Aorta (tissue), 5 donors: ENCODE measurements at regions of chr5 and their contacts with region 1.

Region 1: DNA sequence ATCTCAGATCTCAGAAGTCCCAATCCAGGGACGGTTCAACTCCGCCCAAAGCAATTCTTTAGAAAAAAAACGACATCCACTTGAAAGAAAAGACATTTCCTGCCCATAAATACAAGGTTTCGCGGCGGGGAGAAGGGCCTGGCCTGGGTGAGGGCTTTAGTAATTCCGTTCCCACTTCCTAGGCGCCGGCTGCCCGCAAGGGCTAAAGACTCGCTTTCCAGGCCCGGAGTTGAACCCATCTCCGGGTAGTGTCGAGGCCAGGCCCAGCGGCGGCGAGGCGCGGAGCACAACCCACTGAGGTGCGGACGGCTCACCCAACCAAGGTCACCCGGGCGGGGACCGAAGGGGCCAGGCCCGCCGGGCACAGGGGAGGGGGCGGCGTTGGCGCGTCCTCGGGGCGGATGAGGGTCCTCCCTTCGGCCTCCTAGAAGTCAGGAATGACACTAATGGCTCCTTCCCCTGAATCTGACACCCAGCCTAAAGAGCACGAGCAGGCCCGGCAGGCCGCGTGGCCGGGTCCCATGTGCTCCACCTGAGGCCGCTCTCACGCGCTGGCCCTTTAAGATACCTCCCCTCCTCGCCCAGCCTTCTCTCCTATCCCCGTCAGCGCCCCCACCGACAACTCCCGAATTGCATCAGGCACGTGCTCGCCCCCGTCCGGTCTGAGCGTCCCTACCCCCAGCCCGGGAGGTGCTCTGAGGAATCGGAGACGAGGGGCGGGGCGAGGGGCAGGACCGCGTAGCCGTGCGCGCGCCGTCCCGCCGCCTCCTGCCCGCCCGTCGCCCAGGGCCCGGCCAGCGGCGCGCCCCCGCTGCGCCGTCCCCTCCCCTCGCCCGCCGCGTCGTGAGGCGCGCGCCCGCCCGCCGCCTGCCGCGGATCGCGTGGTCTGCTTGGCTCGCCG is 467 bp upstream of the LARP1 start:
- DNase-seq: peak; percentile 100
- ATAC-seq: peak; percentile 95
- H3K4me3 ChIP-seq: peak overlapping the region; percentile 66 to 91
- H3K27ac ChIP-seq: peak overlapping the region; percentile 57 to 98
- H3K4me1 ChIP-seq: peaks cover 0 to 3% of the 10 kb centered on the region in 2 donors
- H3K27me3 ChIP-seq: no peaks in the 10 kb centered on the region

Region 2: DNA sequence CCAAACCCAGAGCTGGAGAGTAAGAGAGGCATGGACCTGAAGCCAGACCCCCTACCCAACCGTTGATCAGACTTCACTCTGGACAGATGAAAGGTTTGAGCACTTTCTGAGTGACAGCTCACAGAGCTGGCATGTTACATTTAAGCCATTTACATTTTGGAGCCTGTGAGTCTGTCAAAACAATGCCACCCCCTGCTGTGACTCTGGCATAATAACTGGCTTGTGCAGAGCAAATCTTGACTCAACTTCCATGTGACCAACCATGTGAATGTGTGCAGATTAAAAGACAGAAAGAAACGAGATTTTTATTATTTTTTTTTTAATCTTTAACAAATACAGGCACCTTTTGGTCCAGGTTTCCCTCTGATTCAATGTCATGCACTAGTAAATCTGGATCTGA is 667.5 kb before region 1 on chr5:
- intact Hi-C with region 1: no loop called
- DNase-seq: no peak
- ATAC-seq: no peak
- H3K4me3 ChIP-seq: no peak overlapping the region
- H3K27ac ChIP-seq: no peak overlapping the region
- H3K4me1 ChIP-seq: no peaks in the 10 kb centered on the region
- H3K27me3 ChIP-seq: no peaks in the 10 kb centered on the region

Region 3: GRCh38 chr5:154683101-154683880 is 71.4 kb before region 1 on chr5:
- intact Hi-C with region 1: loop called (anchors 5 kb)
- DNase-seq: no peak
- ATAC-seq: no peak
- H3K4me3 ChIP-seq: peak overlapping the region in 1 of 2 donors; percentile 36
- H3K27ac ChIP-seq: peak overlapping the region in 1 of 2 donors; percentile 34
- H3K4me1 ChIP-seq: no peaks in the 10 kb centered on the region
- H3K27me3 ChIP-seq: no peaks in the 10 kb centered on the region

Region 4: DNA sequence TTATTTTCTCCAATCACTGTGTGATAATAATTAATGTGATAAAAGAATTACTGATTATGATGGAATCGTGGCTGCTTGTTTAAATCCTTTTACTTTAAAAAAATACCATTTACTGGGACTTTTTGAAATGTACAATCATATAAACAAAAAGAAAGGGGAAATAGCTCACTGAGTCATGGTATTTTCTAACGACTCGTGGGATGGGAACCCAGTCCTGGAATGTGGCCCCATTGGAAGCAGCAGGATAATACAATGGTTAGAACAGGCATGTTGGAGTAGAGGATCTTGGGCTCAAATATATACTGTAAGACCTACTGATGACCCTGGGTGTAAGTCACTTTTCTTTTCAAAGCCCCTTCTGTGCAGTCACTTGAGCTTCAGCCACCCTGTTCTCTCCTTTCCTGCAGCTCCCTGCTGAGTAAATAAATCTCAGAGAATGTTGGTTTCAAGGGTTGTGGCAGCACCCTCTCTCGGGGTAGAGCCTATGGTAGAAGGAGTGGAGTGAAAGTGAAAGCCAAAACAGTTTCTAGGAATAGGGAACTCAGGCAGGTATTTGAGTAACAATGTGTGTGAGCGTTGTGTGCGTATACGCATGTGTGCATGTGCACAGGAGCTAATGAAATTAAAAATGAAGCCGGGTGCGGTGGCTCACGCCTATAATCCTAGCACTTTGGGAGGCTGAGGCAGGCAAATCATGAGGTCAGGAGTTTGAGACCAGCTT is 40.3 kb before region 1 on chr5:
- intact Hi-C with region 1: loop called in 1 of 2 experiments (anchors 5 kb)
- DNase-seq: no peak
- ATAC-seq: peak; percentile 44
- H3K4me3 ChIP-seq: no peak overlapping the region
- H3K27ac ChIP-seq: no peak overlapping the region
- H3K4me1 ChIP-seq: no peaks in the 10 kb centered on the region
- H3K27me3 ChIP-seq: no peaks in the 10 kb centered on the region

Region 5: DNA sequence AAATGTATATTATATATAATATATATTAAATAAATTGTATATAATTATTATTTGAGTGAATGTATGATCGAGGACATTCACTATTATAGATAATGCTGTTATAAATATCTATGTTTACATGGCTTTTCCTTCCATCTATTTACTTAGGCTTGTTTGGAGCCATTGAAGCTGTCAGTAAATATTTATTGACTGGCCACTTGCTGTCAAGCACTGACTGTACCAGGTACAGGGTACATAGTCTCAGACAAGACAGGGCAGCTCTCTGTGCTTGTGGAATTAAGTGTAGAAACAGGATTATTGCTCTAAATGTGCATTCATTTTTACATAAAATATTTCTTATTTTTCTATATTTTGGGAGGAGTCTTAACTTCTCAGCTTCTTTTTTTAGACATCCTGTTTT is 79.3 kb after region 1 on chr5:
- intact Hi-C with region 1: loop called in 1 of 2 experiments (anchors 2 kb)
- DNase-seq: no peak
- ATAC-seq: no peak
- H3K4me3 ChIP-seq: no peak overlapping the region
- H3K27ac ChIP-seq: no peak overlapping the region
- H3K4me1 ChIP-seq: no peaks in the 10 kb centered on the region
- H3K27me3 ChIP-seq: no peaks in the 10 kb centered on the region

Region 6: GRCh38 chr5:154857530-154858296 is 103.0 kb after region 1 on chr5:
- intact Hi-C with region 1: loop called in 1 of 2 experiments (anchors 1 kb)
- DNase-seq: peak; percentile 97
- ATAC-seq: peak; percentile 95
- H3K4me3 ChIP-seq: peak overlapping the region; percentile 46 to 69
- H3K27ac ChIP-seq: peak overlapping the region; percentile 8 to 94
- H3K4me1 ChIP-seq: peaks cover 2 to 4% of the 10 kb centered on the region in 2 donors
- H3K27me3 ChIP-seq: no peaks in the 10 kb centered on the region